Prostate gland (tissue), 2 donors: ENCODE measurements at regions of chr21 and their contacts with region 1.

Region 1: DNA sequence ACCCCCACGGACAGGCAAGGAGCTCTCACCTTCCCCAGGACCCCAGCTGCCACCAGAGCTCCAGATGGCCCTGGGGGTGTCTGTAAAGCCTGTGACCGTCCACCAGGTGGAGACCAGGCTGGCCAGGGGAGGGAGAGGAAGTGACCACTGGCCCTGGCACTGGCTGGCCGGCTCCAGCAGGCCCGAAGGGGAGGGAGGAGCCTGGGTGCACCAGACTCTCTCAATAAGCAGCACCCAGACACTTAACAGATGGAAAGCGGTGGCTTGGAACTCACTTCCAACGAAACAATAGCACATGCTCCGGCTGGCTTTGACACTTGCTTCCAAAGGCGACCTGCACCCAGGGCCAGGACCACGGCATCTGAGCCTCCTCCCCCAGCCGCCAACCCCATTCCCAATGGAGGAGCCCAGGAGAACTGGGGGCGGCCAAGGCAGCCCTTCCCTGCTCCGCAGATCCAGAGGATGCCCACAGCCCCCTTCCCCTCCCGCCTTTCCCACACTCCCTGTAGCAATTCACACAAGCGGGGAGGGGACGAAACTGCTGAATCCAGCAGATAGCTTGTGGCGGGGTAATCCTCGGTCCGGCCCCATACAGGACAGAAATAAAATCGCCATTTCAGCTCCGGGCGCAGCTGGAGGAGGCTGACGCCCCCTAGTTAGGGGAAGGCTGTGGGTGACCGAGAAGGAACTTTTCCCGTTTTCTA is 742 bp upstream of the PDE9A start:
- DNase-seq: peak; percentile 74
- H3K4me3 ChIP-seq: peak overlapping the region; percentile 71 to 79
- H3K27ac ChIP-seq: peak overlapping the region; percentile 84 to 90
- H3K4me1 ChIP-seq: peaks cover 12% of the 10 kb centered on the region
- H3K27me3 ChIP-seq: no peaks in the 10 kb centered on the region
- CTCF ChIP-seq: peak; percentile 16 to 82 (median 56)
- POLR2A ChIP-seq: no peak

Region 2: GRCh38 chr21:42593007-42593806 is 59.5 kb before region 1 on chr21:
- intact Hi-C with region 1: loop called (anchors 5 kb)
- DNase-seq: peak; percentile 73
- H3K4me3 ChIP-seq: no peak overlapping the region
- H3K27ac ChIP-seq: no peak overlapping the region
- H3K4me1 ChIP-seq: no peaks in the 10 kb centered on the region
- H3K27me3 ChIP-seq: no peaks in the 10 kb centered on the region
- CTCF ChIP-seq: peak; percentile 60 to 80 (median 74)
- POLR2A ChIP-seq: no peak

Region 3: GRCh38 chr21:42737951-42738590 is 85.4 kb after region 1 on chr21:
- intact Hi-C with region 1: loop called (anchors 10 kb)
- DNase-seq: no peak
- H3K4me3 ChIP-seq: no peak overlapping the region
- H3K27ac ChIP-seq: peak overlapping the region; percentile 63 to 71
- H3K4me1 ChIP-seq: peaks cover 7% of the 10 kb centered on the region
- H3K27me3 ChIP-seq: no peaks in the 10 kb centered on the region
- CTCF ChIP-seq: no peak
- POLR2A ChIP-seq: no peak

Region 4: DNA sequence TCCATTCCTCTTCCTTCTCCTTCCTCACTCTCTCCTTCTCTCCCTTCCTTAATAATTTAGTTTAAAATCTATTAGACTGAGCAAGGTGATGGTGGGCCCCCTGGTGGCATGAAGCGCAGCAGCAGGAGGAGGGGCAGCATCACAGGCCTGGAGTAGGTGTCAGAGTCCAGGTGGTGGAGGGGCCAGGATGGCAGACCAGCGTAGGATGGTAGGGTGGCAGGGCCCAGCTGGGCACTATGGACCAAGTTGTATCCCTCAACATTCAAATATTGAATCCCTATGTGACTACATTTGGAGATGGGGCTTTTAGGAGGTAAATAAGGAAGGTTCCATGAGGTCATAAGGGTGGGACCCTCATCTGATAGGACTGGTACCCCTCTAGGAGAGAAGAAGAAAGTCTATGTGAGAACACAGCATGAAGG is 165.7 kb after region 1 on chr21:
- intact Hi-C with region 1: loop called (anchors 1 kb)
- DNase-seq: peak; percentile 66
- H3K4me3 ChIP-seq: no peak overlapping the region
- H3K27ac ChIP-seq: no peak overlapping the region
- H3K4me1 ChIP-seq: no peaks in the 10 kb centered on the region
- H3K27me3 ChIP-seq: no peaks in the 10 kb centered on the region
- CTCF ChIP-seq: peak; percentile 80 to 96 (median 89)
- POLR2A ChIP-seq: no peak